ENCODE measurements at regions of chr18 and their contacts with region 1.

Region 1: GRCh38 chr18:63244607-63245006 is 75.0 kb downstream of the BCL2 start:
- DNase-seq: no peak
- ATAC-seq: no peak
- H3K4me3 ChIP-seq: no peak overlapping the region
- H3K4me3 Mint-ChIP-seq: no peak overlapping the region
- H3K27ac ChIP-seq: no peak overlapping the region
- H3K27ac Mint-ChIP-seq: no peak overlapping the region
- H3K4me1 ChIP-seq: no peaks in the 10 kb centered on the region
- H3K4me1 Mint-ChIP-seq: peaks cover 37% of the 10 kb centered on the region
- H3K27me3 ChIP-seq: no peaks in the 10 kb centered on the region
- H3K27me3 Mint-ChIP-seq: no peaks in the 10 kb centered on the region
- CTCF ChIP-seq: no peak

Region 2: GRCh38 chr18:63207143-63207790 is 37.3 kb before region 1 on chr18:
- CTCF ChIA-PET with region 1: no interaction called
- POLR2A ChIA-PET with region 1: no interaction called
- intact Hi-C with region 1: loop called (anchors 5 kb)
- DNase-seq: peak; percentile 44
- ATAC-seq: peak; percentile 55
- H3K4me3 ChIP-seq: peak overlapping the region in 2 of 5 experiments; percentile 15 to 31
- H3K4me3 Mint-ChIP-seq: peak overlapping the region; percentile 75
- H3K27ac ChIP-seq: peak overlapping the region; percentile 26 to 52
- H3K27ac Mint-ChIP-seq: peak overlapping the region; percentile 79
- H3K4me1 ChIP-seq: peaks cover 57 to 58% of the 10 kb centered on the region in 2 donors
- H3K4me1 Mint-ChIP-seq: peaks cover 80% of the 10 kb centered on the region
- H3K27me3 ChIP-seq: no peaks in the 10 kb centered on the region
- H3K27me3 Mint-ChIP-seq: no peaks in the 10 kb centered on the region
- CTCF ChIP-seq: no peak

Region 3: DNA sequence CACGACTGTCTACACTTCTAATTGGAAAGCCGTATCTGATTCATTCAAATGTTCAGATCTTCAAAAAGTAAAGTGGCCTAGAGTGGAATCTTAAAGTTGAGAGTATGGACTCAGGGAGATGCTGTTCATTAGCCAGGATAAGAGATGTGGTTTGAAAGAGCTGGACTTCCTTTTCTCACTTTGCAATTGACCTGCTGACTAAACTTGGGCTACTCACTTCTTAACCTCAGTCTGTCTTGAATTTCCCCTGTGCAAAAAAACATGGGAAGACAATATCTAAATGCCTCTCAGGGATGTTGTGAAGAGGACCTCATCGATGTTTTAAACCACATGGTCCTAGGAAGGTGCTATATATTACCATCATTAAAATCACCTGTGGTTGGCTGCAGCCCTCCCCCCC is 10.8 kb after region 1 on chr18:
- CTCF ChIA-PET with region 1: no interaction called
- POLR2A ChIA-PET with region 1: no interaction called
- intact Hi-C with region 1: no loop called
- DNase-seq: no peak
- ATAC-seq: no peak
- H3K4me3 ChIP-seq: no peak overlapping the region
- H3K4me3 Mint-ChIP-seq: no peak overlapping the region
- H3K27ac ChIP-seq: peak overlapping the region in 1 of 2 donors; percentile 7
- H3K27ac Mint-ChIP-seq: peak overlapping the region; percentile 65
- H3K4me1 ChIP-seq: peaks cover 9 to 12% of the 10 kb centered on the region in 2 donors
- H3K4me1 Mint-ChIP-seq: peaks cover 54% of the 10 kb centered on the region
- H3K27me3 ChIP-seq: no peaks in the 10 kb centered on the region
- H3K27me3 Mint-ChIP-seq: no peaks in the 10 kb centered on the region
- CTCF ChIP-seq: no peak

Measured in B cell (primary cell).